Activated B cell treated with CpG ODN at 0.5 μM for 24 hours (primary cell): ENCODE measurements at regions of chr2 and their contacts with region 1.

Region 1: GRCh38 chr2:231604685-231605606 is 12.3 kb downstream of the TEX44 start:
- DNase-seq: peak; percentile 99
- ATAC-seq: peak; percentile 88
- H3K4me3 Mint-ChIP-seq: peak overlapping the region; percentile 72
- H3K27ac Mint-ChIP-seq: peak overlapping the region; percentile 87
- H3K4me1 Mint-ChIP-seq: peaks cover 31% of the 10 kb centered on the region
- H3K27me3 Mint-ChIP-seq: no peaks in the 10 kb centered on the region
- CTCF ChIP-seq: no peak

Region 2: GRCh38 chr2:231482806-231483391 is 122.0 kb before region 1 on chr2:
- CTCF ChIA-PET with region 1: interaction called, 8 read pairs
- POLR2A ChIA-PET with region 1: interaction called, 4 read pairs
- intact Hi-C with region 1: loop called (anchors 1 kb)
- DNase-seq: peak; percentile 77
- ATAC-seq: peak; percentile 85
- H3K4me3 Mint-ChIP-seq: peak overlapping the region; percentile 80
- H3K27ac Mint-ChIP-seq: peak overlapping the region; percentile 82
- H3K4me1 Mint-ChIP-seq: peaks cover 9% of the 10 kb centered on the region
- H3K27me3 Mint-ChIP-seq: no peaks in the 10 kb centered on the region
- CTCF ChIP-seq: peak; percentile 29

Region 3: DNA sequence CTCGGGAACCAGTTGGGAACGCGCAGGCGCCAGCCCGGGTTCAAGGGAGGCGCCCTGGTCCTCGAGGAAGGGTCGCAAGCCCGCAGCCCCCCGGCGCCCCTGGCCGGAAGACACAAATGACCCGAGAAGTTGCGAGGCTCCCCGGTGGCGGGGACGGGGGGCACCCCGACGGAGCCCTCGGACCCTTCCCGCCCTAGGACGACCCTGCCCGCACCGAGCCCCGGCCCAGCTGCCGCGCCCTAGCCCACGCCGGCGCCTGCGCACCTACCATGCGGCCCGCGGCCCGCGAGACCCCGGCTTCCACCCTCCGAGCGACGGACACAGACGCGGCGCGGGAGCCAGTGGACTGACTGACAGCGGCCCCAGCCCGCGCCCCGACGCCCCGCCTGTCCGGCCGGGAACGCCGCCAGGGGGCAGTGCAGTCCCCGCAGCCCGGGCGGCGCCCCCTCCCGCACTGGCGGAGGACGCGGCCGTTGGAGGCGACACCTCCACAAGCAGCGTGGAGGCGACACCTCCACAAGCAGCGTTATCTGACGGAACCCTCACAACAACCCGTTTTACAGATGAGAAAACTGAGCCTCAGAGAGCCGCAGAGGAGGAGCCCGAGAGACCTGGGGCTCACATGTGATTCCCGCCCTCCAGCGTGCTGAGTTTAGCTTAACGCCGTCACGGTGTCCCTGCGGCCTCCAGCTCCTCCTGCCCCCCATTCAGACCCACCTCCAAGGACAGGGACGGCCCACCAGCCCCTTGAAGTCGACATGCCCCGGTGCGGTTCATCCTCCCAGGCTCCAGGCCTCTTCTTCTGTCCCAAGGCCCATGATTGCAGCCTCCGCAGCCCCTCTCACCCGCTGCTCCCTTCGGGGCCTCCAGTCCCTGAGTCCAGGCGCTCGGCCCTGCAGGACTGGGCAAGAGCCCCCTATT is 74.6 kb before region 1 on chr2 and contains the start of gene NMUR1:
- CTCF ChIA-PET with region 1: interaction called, 3 read pairs
- POLR2A ChIA-PET with region 1: no interaction called
- intact Hi-C with region 1: loop called (anchors 1 kb)
- DNase-seq: peak; percentile 81
- ATAC-seq: peak; percentile 97
- H3K4me3 Mint-ChIP-seq: peak within 1 kb of the TSS; percentile 35
- H3K27ac Mint-ChIP-seq: no peak within 1 kb of the TSS
- H3K4me1 Mint-ChIP-seq: peaks cover 11% of the 10 kb centered on the region
- H3K27me3 Mint-ChIP-seq: peaks cover 27% of the 10 kb centered on the region
- CTCF ChIP-seq: peak; percentile 66
- total RNA-seq, gene NMUR1: not detected in 2 replicates

Region 4: GRCh38 chr2:231590619-231591018 is 14.3 kb before region 1 on chr2:
- CTCF ChIA-PET with region 1: interaction called, 11 read pairs
- POLR2A ChIA-PET with region 1: interaction called, 5 read pairs
- intact Hi-C with region 1: no loop called
- DNase-seq: no peak
- ATAC-seq: no peak
- H3K4me3 Mint-ChIP-seq: no peak overlapping the region
- H3K27ac Mint-ChIP-seq: no peak overlapping the region
- H3K4me1 Mint-ChIP-seq: no peaks in the 10 kb centered on the region
- H3K27me3 Mint-ChIP-seq: no peaks in the 10 kb centered on the region
- CTCF ChIP-seq: no peak

Region 5: DNA sequence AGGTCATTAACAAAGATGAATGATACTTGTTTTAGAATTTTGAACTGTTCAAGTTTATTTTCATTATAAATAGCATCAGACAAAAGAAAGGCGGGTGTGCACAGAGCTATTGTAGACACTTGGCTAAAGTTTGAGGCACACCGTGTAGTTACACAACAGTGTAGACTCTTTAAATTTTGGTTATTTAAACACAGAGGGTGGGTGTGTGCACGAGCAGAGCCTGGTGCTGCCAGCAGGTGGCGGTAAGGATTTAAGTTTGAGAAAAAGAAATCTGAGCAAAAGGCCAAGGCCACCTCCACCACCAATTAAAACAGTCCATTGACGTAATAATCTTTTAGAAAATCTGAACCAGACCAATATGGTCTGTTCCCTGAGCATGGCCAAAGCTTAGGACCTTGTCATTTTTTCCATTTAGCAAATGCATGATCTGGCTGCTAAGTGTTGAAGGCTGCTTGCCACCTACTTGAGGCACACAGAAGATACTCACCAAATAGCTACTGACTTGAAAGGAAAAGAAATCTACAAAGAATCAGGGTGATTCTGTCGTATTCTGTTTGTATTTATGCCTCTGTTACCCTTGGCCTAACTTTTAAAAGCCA is 195.6 kb after region 1 on chr2:
- CTCF ChIA-PET with region 1: no interaction called
- POLR2A ChIA-PET with region 1: interaction called, 10 read pairs
- intact Hi-C with region 1: no loop called
- DNase-seq: no peak
- ATAC-seq: no peak
- H3K4me3 Mint-ChIP-seq: no peak overlapping the region
- H3K27ac Mint-ChIP-seq: no peak overlapping the region
- H3K4me1 Mint-ChIP-seq: no peaks in the 10 kb centered on the region
- H3K27me3 Mint-ChIP-seq: no peaks in the 10 kb centered on the region
- CTCF ChIP-seq: no peak